Vagina (tissue), 2 donors: ENCODE measurements at regions of chr2 and their contacts with region 1.

Region 1: GRCh38 chr2:90221300-90221651 is 1529.8 kb downstream of the RPIA start:
- DNase-seq: no peak
- H3K4me3 ChIP-seq: no peak overlapping the region
- H3K27ac ChIP-seq: no peak overlapping the region
- H3K4me1 ChIP-seq: no peaks in the 10 kb centered on the region
- H3K27me3 ChIP-seq: no peaks in the 10 kb centered on the region
- CTCF ChIP-seq: no peak
- POLR2A ChIP-seq: no peak

Region 2: GRCh38 chr2:88451811-88452565 is 1769.3 kb before region 1 on chr2:
- intact Hi-C with region 1: no loop called
- DNase-seq: no peak
- H3K4me3 ChIP-seq: peak overlapping the region in 1 of 2 donors; percentile 48
- H3K27ac ChIP-seq: no peak overlapping the region
- H3K4me1 ChIP-seq: peaks cover 5% of the 10 kb centered on the region
- H3K27me3 ChIP-seq: peaks cover 23% of the 10 kb centered on the region
- CTCF ChIP-seq: no peak
- POLR2A ChIP-seq: no peak

Region 3: DNA sequence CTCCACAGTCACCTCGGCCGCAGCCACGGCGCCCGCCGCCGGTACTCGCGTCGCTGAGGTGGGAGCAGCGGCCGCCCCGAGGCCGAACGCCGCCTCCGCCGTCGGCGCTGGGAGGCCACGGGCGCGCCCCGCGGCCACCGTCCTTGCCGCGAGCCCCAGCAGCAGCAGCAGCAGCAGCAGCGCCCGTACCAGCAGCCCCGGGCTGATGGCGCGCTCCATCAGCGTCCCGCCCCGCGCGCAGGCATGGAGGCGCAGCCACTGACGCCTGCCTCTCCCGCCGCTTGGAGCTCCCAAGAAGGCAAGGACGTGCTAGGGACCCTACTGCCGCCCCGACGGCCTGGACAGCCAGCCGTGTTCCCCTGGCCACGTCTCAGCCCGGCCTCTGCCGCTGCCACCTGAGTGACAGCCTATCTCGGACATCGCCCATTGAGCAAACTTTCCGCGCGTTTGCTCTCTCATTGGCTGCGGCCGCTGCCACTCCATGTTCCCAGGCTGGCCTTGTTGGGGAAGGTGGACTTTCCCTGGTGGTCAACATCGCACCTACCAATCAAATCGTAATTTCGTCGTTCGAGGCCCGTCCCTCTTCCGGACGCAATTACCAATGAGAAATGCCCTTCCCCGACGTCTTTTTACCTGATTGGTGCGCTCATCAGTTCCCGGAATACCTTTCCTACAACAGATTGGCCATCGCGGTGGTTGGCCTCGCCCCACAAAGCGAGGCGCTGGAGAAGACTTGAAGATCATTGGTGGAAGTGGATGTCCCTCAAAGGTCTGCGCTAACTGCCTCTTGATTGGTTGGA is 1594.0 kb before region 1 on chr2 and contains the start of gene EIF2AK3:
- intact Hi-C with region 1: no loop called
- DNase-seq: peak; percentile 99 to 100
- H3K4me3 ChIP-seq: peak within 1 kb of the TSS; percentile 83 to 88
- H3K27ac ChIP-seq: peak within 1 kb of the TSS; percentile 99
- H3K4me1 ChIP-seq: peaks cover 53% of the 10 kb centered on the region
- H3K27me3 ChIP-seq: no peaks in the 10 kb centered on the region
- CTCF ChIP-seq: peak in 2 of 3 experiments; percentile 1 to 33
- POLR2A ChIP-seq: peak in 1 of 2 donors; percentile 99
- total RNA-seq, gene EIF2AK3: 19.6 TPM

Region 4: GRCh38 chr2:89778973-89779372 is 442.3 kb before region 1 on chr2:
- intact Hi-C with region 1: no loop called
- DNase-seq: no peak
- H3K4me3 ChIP-seq: no peak overlapping the region
- H3K27ac ChIP-seq: no peak overlapping the region
- H3K4me1 ChIP-seq: no peaks in the 10 kb centered on the region
- H3K27me3 ChIP-seq: no peaks in the 10 kb centered on the region
- CTCF ChIP-seq: no peak
- POLR2A ChIP-seq: no peak

Region 5: DNA sequence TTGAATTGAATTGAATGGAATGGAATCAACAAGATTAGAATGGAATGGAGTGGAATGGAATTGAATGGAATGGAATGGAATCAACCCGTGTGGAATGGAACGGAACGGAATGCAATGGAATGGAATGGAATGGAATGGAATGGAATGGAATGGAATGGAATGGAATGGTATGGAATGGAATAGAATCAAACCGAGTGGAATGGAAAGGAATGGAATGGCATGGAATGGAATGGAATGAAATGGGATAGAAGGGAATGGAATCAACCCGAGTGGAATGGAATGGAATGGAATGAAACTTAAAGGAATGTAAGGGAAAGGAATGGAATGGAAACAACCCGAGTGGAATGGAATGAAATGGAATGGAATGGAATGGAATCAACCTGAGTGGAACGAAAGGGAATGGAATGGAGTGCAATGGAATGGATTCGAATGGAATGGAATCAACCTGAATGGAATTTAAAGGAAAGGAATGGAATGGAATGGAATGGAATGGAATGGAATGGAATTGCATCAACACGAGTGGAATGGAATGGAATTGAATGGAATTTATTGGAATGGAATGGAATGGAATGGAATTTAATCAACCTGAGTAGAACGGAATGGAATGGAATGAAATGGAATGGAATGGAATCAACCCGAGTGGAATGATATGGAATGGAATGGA is 383.2 kb before region 1 on chr2:
- intact Hi-C with region 1: loop called (anchors 5 kb)
- DNase-seq: no peak
- H3K4me3 ChIP-seq: no peak overlapping the region
- H3K27ac ChIP-seq: no peak overlapping the region
- H3K4me1 ChIP-seq: no peaks in the 10 kb centered on the region
- H3K27me3 ChIP-seq: no peaks in the 10 kb centered on the region
- CTCF ChIP-seq: no peak
- POLR2A ChIP-seq: no peak

Region 6: GRCh38 chr2:90207454-90208058 is 13.7 kb before region 1 on chr2:
- intact Hi-C with region 1: no loop called
- DNase-seq: no peak
- H3K4me3 ChIP-seq: no peak overlapping the region
- H3K27ac ChIP-seq: no peak overlapping the region
- H3K4me1 ChIP-seq: no peaks in the 10 kb centered on the region
- H3K27me3 ChIP-seq: no peaks in the 10 kb centered on the region
- CTCF ChIP-seq: no peak
- POLR2A ChIP-seq: no peak